ENCODE measurements at regions of chr3 and their contacts with region 1.

Region 1: DNA sequence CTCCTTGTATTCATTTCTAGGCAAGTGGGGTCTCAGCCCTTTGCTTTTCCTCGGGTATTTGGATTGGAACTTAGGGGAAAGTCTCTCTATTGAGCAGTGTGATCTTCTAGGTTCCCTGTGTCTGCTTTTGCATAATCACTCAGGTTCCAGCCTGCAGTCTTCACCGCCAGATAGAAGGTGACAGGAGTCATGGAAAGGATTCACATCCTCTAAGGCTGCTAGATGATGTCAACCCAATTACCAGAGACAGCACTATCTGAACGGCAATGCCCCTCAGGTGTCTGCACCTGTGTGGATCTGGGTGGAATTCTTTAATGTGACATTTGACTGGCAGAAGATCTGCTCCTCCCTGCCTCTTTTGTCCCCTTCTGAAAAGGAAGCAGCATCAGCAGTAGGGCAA is 177.7 kb downstream of the P3H2 start:
- DNase-seq: no peak
- ATAC-seq: no peak
- H3K4me3 ChIP-seq: no peak overlapping the region
- H3K27ac ChIP-seq: no peak overlapping the region
- H3K4me1 ChIP-seq: peaks cover 0 to under 1% of the 10 kb centered on the region in 2 donors
- H3K27me3 ChIP-seq: no peaks in the 10 kb centered on the region
- CTCF ChIP-seq: no peak
- POLR2A ChIP-seq: no peak

Region 2: GRCh38 chr3:189056646-189057335 is 886.2 kb before region 1 on chr3:
- in situ Hi-C with region 1: no loop called
- intact Hi-C with region 1: no loop called
- DNase-seq: peak in 1 of 2 donors; percentile 6
- ATAC-seq: peak in 1 of 2 donors; percentile 36
- H3K4me3 ChIP-seq: no peak overlapping the region
- H3K27ac ChIP-seq: no peak overlapping the region
- H3K4me1 ChIP-seq: no peaks in the 10 kb centered on the region
- H3K27me3 ChIP-seq: no peaks in the 10 kb centered on the region
- CTCF ChIP-seq: no peak
- POLR2A ChIP-seq: no peak

Region 3: GRCh38 chr3:189621948-189622603 is 320.9 kb before region 1 on chr3:
- in situ Hi-C with region 1: no loop called
- intact Hi-C with region 1: no loop called
- DNase-seq: peak; percentile 44 to 73
- ATAC-seq: peak; percentile 70 to 76
- H3K4me3 ChIP-seq: peak overlapping the region in 3 of 4 donors; percentile 5 to 29 (median 14)
- H3K27ac ChIP-seq: peak overlapping the region; percentile 70 to 81 (median 74)
- H3K4me1 ChIP-seq: peaks cover 33 to 37% of the 10 kb centered on the region in 2 donors
- H3K27me3 ChIP-seq: no peaks in the 10 kb centered on the region
- CTCF ChIP-seq: no peak
- POLR2A ChIP-seq: no peak

Region 4: GRCh38 chr3:189737071-189737470 is 205.9 kb before region 1 on chr3:
- in situ Hi-C with region 1: no loop called
- intact Hi-C with region 1: no loop called
- DNase-seq: no peak
- ATAC-seq: no peak
- H3K4me3 ChIP-seq: no peak overlapping the region
- H3K27ac ChIP-seq: no peak overlapping the region
- H3K4me1 ChIP-seq: no peaks in the 10 kb centered on the region
- H3K27me3 ChIP-seq: no peaks in the 10 kb centered on the region
- CTCF ChIP-seq: no peak
- POLR2A ChIP-seq: no peak

Region 5: GRCh38 chr3:189901477-189901876 is 41.5 kb before region 1 on chr3:
- in situ Hi-C with region 1: no loop called
- intact Hi-C with region 1: loop called (anchors 1 kb)
- DNase-seq: no peak
- ATAC-seq: no peak
- H3K4me3 ChIP-seq: no peak overlapping the region
- H3K27ac ChIP-seq: no peak overlapping the region
- H3K4me1 ChIP-seq: no peaks in the 10 kb centered on the region
- H3K27me3 ChIP-seq: no peaks in the 10 kb centered on the region
- CTCF ChIP-seq: no peak
- POLR2A ChIP-seq: no peak

Region 6: DNA sequence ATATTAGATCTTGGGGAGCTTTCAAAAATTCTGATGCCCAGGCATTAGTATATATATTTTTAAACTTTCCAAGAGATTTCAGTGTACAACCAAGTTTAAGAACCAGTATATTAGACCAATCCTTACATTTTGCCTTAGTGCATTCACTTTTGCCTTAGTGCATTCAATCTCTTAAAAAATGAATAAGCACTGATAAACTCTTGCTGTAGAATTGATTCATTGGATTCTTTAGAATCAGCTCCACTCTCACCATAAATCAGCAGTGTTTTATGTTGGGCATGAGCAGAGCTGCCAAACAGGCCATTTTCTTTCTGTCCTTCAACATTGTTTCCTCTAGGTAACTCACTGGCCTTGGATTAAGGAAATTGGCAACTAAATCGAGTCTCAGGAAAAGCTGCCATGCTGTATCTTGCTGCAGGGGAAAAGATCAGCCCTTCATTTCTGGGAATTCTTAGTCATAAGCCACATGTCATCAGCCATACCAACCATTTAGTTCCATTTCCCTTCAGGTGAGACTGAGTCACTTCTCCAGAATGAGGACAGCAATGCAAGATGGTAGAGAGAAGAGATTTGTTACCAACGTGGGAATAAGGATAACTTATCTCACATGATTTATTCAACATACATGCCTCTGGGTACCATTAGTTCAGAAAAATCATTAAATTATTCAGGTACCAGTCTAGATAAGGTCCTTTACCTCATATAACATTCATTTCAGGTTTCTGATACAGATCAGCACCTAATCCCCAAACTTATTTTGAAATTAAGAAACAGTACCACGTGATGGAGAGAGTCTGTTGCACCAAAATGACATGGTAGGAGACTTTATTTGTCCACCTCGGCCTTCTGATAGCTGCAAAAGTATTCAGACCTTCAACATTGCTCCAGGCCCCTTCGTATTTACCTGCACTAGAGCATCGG is 14.7 kb before region 1 on chr3:
- in situ Hi-C with region 1: no loop called
- intact Hi-C with region 1: no loop called
- DNase-seq: no peak
- ATAC-seq: no peak
- H3K4me3 ChIP-seq: no peak overlapping the region
- H3K27ac ChIP-seq: no peak overlapping the region
- H3K4me1 ChIP-seq: no peaks in the 10 kb centered on the region
- H3K27me3 ChIP-seq: no peaks in the 10 kb centered on the region
- CTCF ChIP-seq: no peak
- POLR2A ChIP-seq: no peak